ENCODE measurements at regions of chr17 and their contacts with region 1.

Region 1: GRCh38 chr17:64107500-64108235 is 22.3 kb downstream of the ERN1 start:
- DNase-seq: no peak
- ATAC-seq: no peak
- H3K4me3 ChIP-seq: no peak overlapping the region
- H3K4me3 Mint-ChIP-seq: peak overlapping the region in 6 of 10 donors; percentile 5 to 68 (median 40)
- H3K27ac ChIP-seq: peak overlapping the region; percentile 32
- H3K27ac Mint-ChIP-seq: peak overlapping the region; percentile 54 to 91 (median 85)
- H3K4me1 ChIP-seq: peaks cover 38 to 51% of the 10 kb centered on the region in 2 donors
- H3K4me1 Mint-ChIP-seq: peaks cover 32 to 77% (median 53%) of the 10 kb centered on the region in 7 donors
- H3K27me3 ChIP-seq: no peaks in the 10 kb centered on the region
- H3K27me3 Mint-ChIP-seq: no peaks in the 10 kb centered on the region

Region 2: GRCh38 chr17:64051153-64051552 is 56.5 kb before region 1 on chr17:
- CTCF ChIA-PET with region 1: no interaction called
- POLR2A ChIA-PET with region 1: interaction called, 4 read pairs
- intact Hi-C with region 1: loop called in 1 of 2 experiments (anchors 1 kb)
- DNase-seq: peak in 7 of 9 donors; percentile 58 to 86 (median 76)
- ATAC-seq: peak; percentile 99
- H3K4me3 ChIP-seq: peak overlapping the region; percentile 19
- H3K4me3 Mint-ChIP-seq: peak overlapping the region; percentile 1 to 73 (median 60)
- H3K27ac ChIP-seq: peak overlapping the region; percentile 55
- H3K27ac Mint-ChIP-seq: peak overlapping the region; percentile 86 to 97 (median 95)
- H3K4me1 ChIP-seq: peaks cover 32 to 37% of the 10 kb centered on the region in 2 donors
- H3K4me1 Mint-ChIP-seq: peaks cover 26 to 52% (median 43%) of the 10 kb centered on the region in 7 donors
- H3K27me3 ChIP-seq: no peaks in the 10 kb centered on the region
- H3K27me3 Mint-ChIP-seq: no peaks in the 10 kb centered on the region

Region 3: GRCh38 chr17:64081802-64082799 is 25.6 kb before region 1 on chr17:
- CTCF ChIA-PET with region 1: no interaction called
- POLR2A ChIA-PET with region 1: interaction called, 6 read pairs
- intact Hi-C with region 1: loop called in 1 of 2 experiments (anchors 1 kb)
- DNase-seq: peak in 5 of 9 donors; percentile 21 to 36 (median 30)
- ATAC-seq: peak; percentile 81
- H3K4me3 ChIP-seq: peak overlapping the region; percentile 4
- H3K4me3 Mint-ChIP-seq: peak overlapping the region in 8 of 10 donors; percentile 49 to 84 (median 72)
- H3K27ac ChIP-seq: peak overlapping the region; percentile 37
- H3K27ac Mint-ChIP-seq: peak overlapping the region in 6 of 9 donors; percentile 52 to 91 (median 74)
- H3K4me1 ChIP-seq: peaks cover 49 to 75% of the 10 kb centered on the region in 2 donors
- H3K4me1 Mint-ChIP-seq: peaks cover 7 to 25% (median 11%) of the 10 kb centered on the region in 7 donors
- H3K27me3 ChIP-seq: no peaks in the 10 kb centered on the region
- H3K27me3 Mint-ChIP-seq: no peaks in the 10 kb centered on the region

Region 4: DNA sequence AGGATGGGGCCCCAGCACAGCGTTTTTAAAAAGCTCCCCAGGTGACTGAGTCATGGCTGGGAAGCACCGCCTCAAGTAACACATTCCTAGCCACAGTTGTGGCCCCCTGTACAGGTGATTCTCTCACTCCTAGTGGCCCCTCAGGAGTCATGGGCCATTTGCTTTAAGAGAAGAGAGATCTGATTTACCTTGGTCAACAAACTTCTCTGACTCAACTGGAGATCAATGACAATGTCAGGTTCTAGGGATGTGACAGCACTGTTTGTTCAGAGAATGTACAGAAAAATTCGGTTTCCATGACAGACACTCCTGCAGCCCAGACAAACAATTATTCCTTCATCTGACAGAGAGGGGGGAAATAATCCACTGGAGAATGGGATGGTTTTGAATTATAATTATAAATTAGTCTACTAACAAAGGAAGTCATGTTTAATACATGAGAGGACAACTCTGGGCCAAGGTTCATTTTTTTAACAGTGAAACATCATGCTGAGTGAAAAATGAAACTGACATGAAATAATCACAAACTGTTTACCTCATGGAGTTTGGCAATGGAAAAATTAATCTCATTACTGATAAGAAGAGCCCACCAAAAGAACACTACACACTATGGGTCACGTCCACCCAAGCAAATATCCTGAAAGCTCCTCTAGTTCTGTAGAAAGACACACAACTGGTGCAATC is 12.6 kb after region 1 on chr17:
- CTCF ChIA-PET with region 1: interaction called, 4 read pairs
- POLR2A ChIA-PET with region 1: interaction called, 5 read pairs
- intact Hi-C with region 1: loop called in 1 of 2 experiments (anchors 2 kb)
- DNase-seq: no peak
- ATAC-seq: no peak
- H3K4me3 ChIP-seq: no peak overlapping the region
- H3K4me3 Mint-ChIP-seq: peak overlapping the region in 7 of 10 donors; percentile 8 to 92 (median 81)
- H3K27ac ChIP-seq: peak overlapping the region; percentile 64
- H3K27ac Mint-ChIP-seq: peak overlapping the region; percentile 77 to 97 (median 90)
- H3K4me1 ChIP-seq: peaks cover 27 to 36% of the 10 kb centered on the region in 2 donors
- H3K4me1 Mint-ChIP-seq: peaks cover 40 to 76% (median 50%) of the 10 kb centered on the region in 7 donors
- H3K27me3 ChIP-seq: no peaks in the 10 kb centered on the region
- H3K27me3 Mint-ChIP-seq: no peaks in the 10 kb centered on the region

Region 5: GRCh38 chr17:64174686-64175456 is 67.2 kb after region 1 on chr17:
- CTCF ChIA-PET with region 1: no interaction called
- POLR2A ChIA-PET with region 1: no interaction called
- intact Hi-C with region 1: no loop called
- DNase-seq: no peak
- ATAC-seq: peak; percentile 88
- H3K4me3 ChIP-seq: no peak overlapping the region
- H3K4me3 Mint-ChIP-seq: no peak overlapping the region
- H3K27ac ChIP-seq: no peak overlapping the region
- H3K27ac Mint-ChIP-seq: no peak overlapping the region
- H3K4me1 ChIP-seq: no peaks in the 10 kb centered on the region
- H3K4me1 Mint-ChIP-seq: peaks cover 0 to 4% (median 0%) of the 10 kb centered on the region in 7 donors
- H3K27me3 ChIP-seq: no peaks in the 10 kb centered on the region
- H3K27me3 Mint-ChIP-seq: no peaks in the 10 kb centered on the region